Naive thymus-derived CD4-positive, alpha-beta T cell (primary cell): ENCODE measurements at regions of chr19 and their contacts with region 1.

Region 1: GRCh38 chr19:19900729-19901444 is at the start of gene ZNF93:
- DNase-seq: peak; percentile 67 to 94 (median 91)
- ATAC-seq: peak; percentile 99
- H3K4me3 ChIP-seq: peak within 1 kb of the TSS; percentile 83
- H3K4me3 Mint-ChIP-seq: peak within 1 kb of the TSS; percentile 90 to 100 (median 97)
- H3K27ac ChIP-seq: peak within 1 kb of the TSS; percentile 77
- H3K27ac Mint-ChIP-seq: peak within 1 kb of the TSS; percentile 82 to 97 (median 92)
- H3K4me1 ChIP-seq: no peaks in the 10 kb centered on the region
- H3K4me1 Mint-ChIP-seq: peaks cover 16 to 40% (median 32%) of the 10 kb centered on the region in 7 donors
- H3K27me3 ChIP-seq: no peaks in the 10 kb centered on the region
- H3K27me3 Mint-ChIP-seq: no peaks in the 10 kb centered on the region
- total RNA-seq, gene ZNF93: 3.4 to 11.6 (median 7.2) TPM

Region 2: GRCh38 chr19:19203012-19203856 is 697.7 kb before region 1 on chr19 and contains the start of gene NR2C2AP:
- CTCF ChIA-PET with region 1: no interaction called
- POLR2A ChIA-PET with region 1: no interaction called
- intact Hi-C with region 1: loop called in 1 of 2 experiments (anchors 5 kb)
- DNase-seq: peak; percentile 80 to 94 (median 89)
- ATAC-seq: peak; percentile 95
- H3K4me3 ChIP-seq: peak within 1 kb of the TSS; percentile 95
- H3K4me3 Mint-ChIP-seq: peak within 1 kb of the TSS; percentile 90 to 94 (median 92)
- H3K27ac ChIP-seq: peak within 1 kb of the TSS; percentile 89
- H3K27ac Mint-ChIP-seq: peak within 1 kb of the TSS; percentile 88 to 96 (median 93)
- H3K4me1 ChIP-seq: peaks cover 23% of the 10 kb centered on the region in 2 donors
- H3K4me1 Mint-ChIP-seq: peaks cover 22 to 36% (median 30%) of the 10 kb centered on the region in 7 donors
- H3K27me3 ChIP-seq: no peaks in the 10 kb centered on the region
- H3K27me3 Mint-ChIP-seq: peaks cover 0 to 12% (median 0%) of the 10 kb centered on the region in 5 donors
- total RNA-seq, gene NR2C2AP: 13.8 to 33.4 (median 28.7) TPM

Region 3: DNA sequence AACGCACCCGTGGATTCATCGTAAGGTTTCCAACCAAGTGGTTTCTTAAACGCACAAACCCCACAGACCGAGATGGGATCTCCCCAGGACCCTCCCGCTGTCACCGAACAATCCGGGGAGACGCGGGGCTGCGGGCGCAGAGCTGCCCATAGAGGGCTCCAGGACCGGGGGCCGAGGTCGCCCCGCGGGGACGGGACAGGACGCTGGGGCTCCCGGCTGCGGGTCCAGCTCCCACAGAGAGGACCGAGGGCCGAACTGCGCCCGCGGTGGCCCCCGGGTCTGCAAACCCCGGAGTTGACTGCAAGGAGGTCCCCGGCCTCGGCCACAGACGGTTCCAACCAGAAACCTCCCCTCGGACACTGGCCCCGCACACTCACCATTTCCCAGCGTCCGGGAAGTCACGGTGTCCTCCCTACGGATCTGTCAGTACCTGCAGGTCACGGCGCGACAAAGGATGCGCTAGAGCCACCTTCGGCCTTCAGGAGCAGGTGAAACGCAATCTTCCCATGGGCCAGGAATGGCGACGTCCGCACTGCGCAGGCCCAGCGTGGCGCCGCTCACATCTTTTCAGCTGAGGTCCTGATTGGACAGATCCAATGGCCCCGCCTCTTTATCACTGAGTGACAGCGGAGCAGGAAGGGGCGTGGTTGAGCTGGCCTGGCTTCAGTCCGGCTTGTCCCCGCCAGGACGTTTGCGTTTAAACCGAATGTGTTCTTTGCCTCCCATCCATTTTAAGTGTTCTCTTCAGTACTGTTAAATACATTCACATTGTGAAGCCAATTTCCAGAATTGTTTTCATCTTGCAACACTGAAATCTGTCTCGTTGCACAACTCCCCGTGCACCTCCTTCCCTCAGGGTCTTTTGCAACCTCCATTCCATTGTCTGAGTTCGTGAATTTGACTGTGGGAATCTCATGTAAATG is 168.0 kb before region 1 on chr19 and contains the start of gene ZNF14:
- CTCF ChIA-PET with region 1: no interaction called
- POLR2A ChIA-PET with region 1: interaction called, 16 read pairs
- intact Hi-C with region 1: loop called in 1 of 2 experiments (anchors 1 kb)
- DNase-seq: peak; percentile 69 to 91 (median 89)
- ATAC-seq: peak; percentile 100
- H3K4me3 ChIP-seq: peak within 1 kb of the TSS; percentile 78
- H3K4me3 Mint-ChIP-seq: peak within 1 kb of the TSS; percentile 93 to 100 (median 98)
- H3K27ac ChIP-seq: peak within 1 kb of the TSS; percentile 87
- H3K27ac Mint-ChIP-seq: peak within 1 kb of the TSS; percentile 93 to 98 (median 95)
- H3K4me1 ChIP-seq: peaks cover 3 to 7% of the 10 kb centered on the region in 2 donors
- H3K4me1 Mint-ChIP-seq: peaks cover 16 to 39% (median 21%) of the 10 kb centered on the region in 7 donors
- H3K27me3 ChIP-seq: no peaks in the 10 kb centered on the region
- H3K27me3 Mint-ChIP-seq: no peaks in the 10 kb centered on the region
- total RNA-seq, gene ZNF14: 7.0 to 35.0 (median 30.3) TPM

Region 4: GRCh38 chr19:19865739-19866481 is 35.0 kb before region 1 on chr19 and contains the start of gene ZNF253:
- CTCF ChIA-PET with region 1: interaction called, 4 read pairs
- POLR2A ChIA-PET with region 1: interaction called, 36 read pairs
- intact Hi-C with region 1: loop called (anchors 1 kb)
- DNase-seq: peak; percentile 76 to 95 (median 92)
- ATAC-seq: peak; percentile 95
- H3K4me3 ChIP-seq: peak within 1 kb of the TSS; percentile 93
- H3K4me3 Mint-ChIP-seq: peak within 1 kb of the TSS; percentile 98 to 100 (median 100)
- H3K27ac ChIP-seq: peak within 1 kb of the TSS; percentile 86
- H3K27ac Mint-ChIP-seq: peak within 1 kb of the TSS; percentile 96 to 100 (median 99)
- H3K4me1 ChIP-seq: peaks cover 7 to 13% of the 10 kb centered on the region in 2 donors
- H3K4me1 Mint-ChIP-seq: peaks cover 21 to 41% (median 31%) of the 10 kb centered on the region in 7 donors
- H3K27me3 ChIP-seq: no peaks in the 10 kb centered on the region
- H3K27me3 Mint-ChIP-seq: no peaks in the 10 kb centered on the region
- total RNA-seq, gene ZNF253: 9.5 to 33.8 (median 14.8) TPM

Region 5: DNA sequence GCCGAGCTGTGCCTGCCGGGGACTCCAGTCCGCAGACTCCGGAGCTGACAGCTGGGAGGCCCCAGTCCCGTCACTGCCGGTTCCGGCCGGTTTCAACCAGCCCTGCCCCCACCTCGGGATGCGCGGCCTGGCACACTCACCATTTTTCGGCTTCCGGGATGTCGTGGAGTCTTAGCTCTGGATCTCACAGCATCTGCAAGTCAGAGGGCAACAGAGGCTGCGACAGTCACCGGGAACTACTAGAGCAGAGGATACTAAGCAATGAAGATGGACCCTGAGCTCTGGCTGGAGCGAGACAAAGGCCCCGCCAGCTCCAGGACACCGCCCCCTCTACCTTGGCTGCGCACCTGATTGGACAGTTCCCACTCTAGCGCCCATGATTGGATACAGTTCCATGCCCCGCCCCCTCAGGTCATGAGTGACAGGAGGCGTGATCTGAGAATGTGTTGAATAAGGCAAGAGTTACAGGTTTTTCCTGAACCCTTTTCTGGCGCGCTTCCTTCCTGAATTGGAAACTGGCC is 138.4 kb after region 1 on chr19 and contains the start of gene ZNF682:
- CTCF ChIA-PET with region 1: no interaction called
- POLR2A ChIA-PET with region 1: no interaction called
- intact Hi-C with region 1: loop called in 1 of 2 experiments (anchors 10 kb)
- DNase-seq: peak; percentile 83 to 96 (median 94)
- ATAC-seq: peak; percentile 100
- H3K4me3 ChIP-seq: peak within 1 kb of the TSS; percentile 90
- H3K4me3 Mint-ChIP-seq: peak within 1 kb of the TSS; percentile 92 to 99 (median 96)
- H3K27ac ChIP-seq: peak within 1 kb of the TSS; percentile 81
- H3K27ac Mint-ChIP-seq: peak within 1 kb of the TSS; percentile 86 to 98 (median 94)
- H3K4me1 ChIP-seq: no peaks in the 10 kb centered on the region
- H3K4me1 Mint-ChIP-seq: peaks cover 5 to 27% (median 25%) of the 10 kb centered on the region in 7 donors
- H3K27me3 ChIP-seq: no peaks in the 10 kb centered on the region
- H3K27me3 Mint-ChIP-seq: peaks cover 0 to 5% (median 0%) of the 10 kb centered on the region in 5 donors
- total RNA-seq, gene ZNF682: 5.3 to 13.0 (median 9.5) TPM

Region 6: DNA sequence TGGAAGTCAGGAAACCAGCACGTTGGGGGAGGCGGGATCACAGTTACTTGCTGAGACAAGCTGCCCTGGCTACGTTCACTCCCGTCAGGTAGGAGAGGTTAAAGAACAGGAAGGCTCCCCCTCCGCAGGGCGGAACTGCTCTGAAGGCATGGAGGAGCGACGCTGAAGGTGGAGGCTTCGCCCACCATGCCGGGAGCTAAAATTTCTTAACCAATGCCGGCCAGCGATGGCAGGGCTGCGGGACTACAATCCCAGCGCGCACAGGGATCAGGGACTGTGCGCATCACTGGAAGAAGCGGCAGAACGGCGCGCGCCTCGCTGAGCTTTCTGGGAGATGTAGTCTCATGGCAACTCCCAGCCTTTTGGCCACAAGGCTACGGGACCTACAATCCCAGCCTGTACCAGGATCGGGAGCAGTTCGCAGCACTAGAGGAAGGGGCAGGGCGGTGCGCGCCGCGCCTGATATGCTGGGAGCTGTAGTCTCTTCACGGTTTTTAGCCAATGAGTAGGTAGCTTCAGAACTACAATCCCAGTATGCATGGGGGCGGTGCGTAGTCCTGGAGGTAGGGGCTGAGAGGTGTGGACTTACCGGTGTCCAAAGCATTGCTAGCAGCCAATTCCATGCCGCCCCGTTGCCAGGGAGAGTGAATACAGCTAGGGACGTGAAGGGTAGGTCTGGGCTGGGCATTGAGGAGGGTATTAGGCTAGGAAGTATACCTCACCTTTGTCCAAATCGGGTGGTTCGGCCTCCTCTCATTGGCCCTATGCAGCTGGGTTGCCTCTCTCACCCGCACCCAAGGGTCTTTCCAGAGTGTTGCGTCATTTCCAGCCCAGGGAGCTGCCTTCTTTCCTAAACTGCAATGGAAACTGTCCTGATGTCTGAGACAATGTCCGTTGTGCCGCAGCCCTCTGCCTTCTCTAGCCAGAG is 151.2 kb after region 1 on chr19:
- CTCF ChIA-PET with region 1: no interaction called
- POLR2A ChIA-PET with region 1: no interaction called
- intact Hi-C with region 1: loop called in 1 of 2 experiments (anchors 10 kb)
- DNase-seq: peak; percentile 17 to 50 (median 44)
- ATAC-seq: peak; percentile 93
- H3K4me3 ChIP-seq: peak overlapping the region; percentile 98
- H3K4me3 Mint-ChIP-seq: peak overlapping the region; percentile 95 to 100 (median 98)
- H3K27ac ChIP-seq: peak overlapping the region; percentile 77
- H3K27ac Mint-ChIP-seq: peak overlapping the region; percentile 83 to 97 (median 94)
- H3K4me1 ChIP-seq: peaks cover 8% of the 10 kb centered on the region in 2 donors
- H3K4me1 Mint-ChIP-seq: peaks cover 0 to 17% (median 8%) of the 10 kb centered on the region in 7 donors
- H3K27me3 ChIP-seq: no peaks in the 10 kb centered on the region
- H3K27me3 Mint-ChIP-seq: peaks cover 0 to 4% (median 0%) of the 10 kb centered on the region in 5 donors

Region 7: DNA sequence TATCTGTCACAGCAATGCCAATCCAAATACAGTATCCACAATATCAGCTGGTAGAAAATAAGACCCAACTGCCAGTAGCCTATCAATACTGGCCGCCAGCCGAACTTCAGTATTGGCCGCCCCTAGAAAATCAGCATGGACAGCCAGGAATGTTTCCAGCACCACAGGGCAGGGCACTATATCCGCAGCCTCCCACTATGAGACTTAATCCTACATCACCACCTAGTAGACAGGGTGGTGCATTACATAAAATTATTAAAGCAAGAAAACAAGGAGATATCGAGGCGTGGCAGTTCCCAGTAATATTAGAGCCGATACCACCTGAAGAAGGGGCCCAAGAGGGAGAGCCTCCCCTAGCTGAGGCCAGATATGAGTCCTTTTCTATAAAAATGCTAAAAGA is 377.5 kb after region 1 on chr19:
- CTCF ChIA-PET with region 1: no interaction called
- POLR2A ChIA-PET with region 1: no interaction called
- intact Hi-C with region 1: no loop called
- DNase-seq: peak in 2 of 9 donors; percentile 17 to 65
- ATAC-seq: no peak
- H3K4me3 ChIP-seq: no peak overlapping the region
- H3K4me3 Mint-ChIP-seq: no peak overlapping the region
- H3K27ac ChIP-seq: no peak overlapping the region
- H3K27ac Mint-ChIP-seq: no peak overlapping the region
- H3K4me1 ChIP-seq: no peaks in the 10 kb centered on the region
- H3K4me1 Mint-ChIP-seq: no peaks in the 10 kb centered on the region
- H3K27me3 ChIP-seq: no peaks in the 10 kb centered on the region
- H3K27me3 Mint-ChIP-seq: peaks cover 0 to 4% (median 0%) of the 10 kb centered on the region in 5 donors

Region 8: DNA sequence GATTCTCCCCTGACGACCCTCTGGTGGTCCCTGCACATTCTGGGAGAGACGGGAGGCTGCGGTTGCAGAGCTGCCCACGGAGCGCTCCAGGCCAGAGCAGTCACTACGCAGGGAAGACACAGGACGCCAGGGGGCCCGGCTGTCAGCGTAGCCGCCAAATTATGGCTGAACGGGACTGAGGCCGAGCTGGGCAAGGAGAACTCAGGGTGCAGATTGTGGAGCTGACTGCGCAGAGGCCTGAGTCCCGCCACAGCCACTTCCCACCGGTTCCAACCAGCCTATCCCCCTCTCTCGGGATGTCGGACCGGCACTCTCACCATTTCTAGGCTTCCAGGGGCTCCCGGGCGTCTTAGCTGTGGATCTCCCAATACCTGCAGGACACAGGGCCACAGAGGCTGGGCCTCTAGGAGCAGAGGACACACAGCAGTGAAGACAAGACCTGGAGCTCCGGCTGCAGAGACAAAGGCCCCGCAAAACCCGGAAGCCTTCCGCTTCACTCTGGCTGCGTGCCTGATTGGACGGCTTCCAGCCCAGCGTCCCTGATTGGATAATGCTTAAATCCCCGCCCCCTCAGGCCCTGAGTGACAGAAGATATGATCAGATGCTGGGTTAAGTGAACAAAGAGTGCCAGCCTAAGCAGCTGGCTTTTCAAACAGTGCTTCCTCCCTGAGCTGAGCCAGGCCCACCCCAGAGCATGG is 664.6 kb after region 1 on chr19 and contains the start of gene ZNF737:
- CTCF ChIA-PET with region 1: no interaction called
- POLR2A ChIA-PET with region 1: no interaction called
- intact Hi-C with region 1: loop called in 1 of 2 experiments (anchors 5 kb)
- DNase-seq: peak; percentile 78 to 95 (median 89)
- ATAC-seq: peak; percentile 97
- H3K4me3 ChIP-seq: peak within 1 kb of the TSS; percentile 92
- H3K4me3 Mint-ChIP-seq: peak within 1 kb of the TSS; percentile 94 to 100 (median 99)
- H3K27ac ChIP-seq: peak within 1 kb of the TSS; percentile 82
- H3K27ac Mint-ChIP-seq: peak within 1 kb of the TSS; percentile 94 to 99 (median 97)
- H3K4me1 ChIP-seq: no peaks in the 10 kb centered on the region
- H3K4me1 Mint-ChIP-seq: peaks cover 0 to 39% (median 37%) of the 10 kb centered on the region in 7 donors
- H3K27me3 ChIP-seq: no peaks in the 10 kb centered on the region
- H3K27me3 Mint-ChIP-seq: no peaks in the 10 kb centered on the region
- total RNA-seq, gene ZNF737: 13.3 to 43.2 (median 14.9) TPM